ENCODE measurements at regions of chr1 and their contacts with region 1.

Region 1: GRCh38 chr1:237873487-237874211 is 17.1 kb downstream of the ZP4 start:
- DNase-seq: peak; percentile 20
- ATAC-seq: peak; percentile 78
- H3K4me3 Mint-ChIP-seq: no peak overlapping the region
- H3K27ac Mint-ChIP-seq: no peak overlapping the region
- H3K4me1 Mint-ChIP-seq: no peaks in the 10 kb centered on the region
- H3K27me3 Mint-ChIP-seq: peaks cover 4% of the 10 kb centered on the region

Region 2: DNA sequence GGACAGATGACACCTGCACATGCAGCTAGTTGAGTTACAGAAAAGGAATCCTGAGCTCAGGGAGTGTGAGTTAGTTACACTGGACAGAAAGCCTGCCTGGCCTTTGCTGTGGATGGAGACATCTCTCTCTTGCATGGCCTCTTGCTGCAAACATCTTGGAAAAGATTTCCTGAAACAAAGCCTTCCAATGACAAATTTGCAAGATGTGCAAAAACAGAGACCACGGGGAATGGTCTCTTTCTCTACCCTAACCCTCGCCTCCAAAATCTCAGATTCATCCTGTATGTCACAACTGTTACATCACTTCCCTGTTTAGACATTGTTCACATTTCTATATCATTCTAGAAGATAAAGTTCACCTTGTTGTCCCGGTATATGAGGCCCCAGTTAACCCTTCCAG is 416.1 kb before region 1 on chr1:
- CTCF ChIA-PET with region 1: no interaction called
- POLR2A ChIA-PET with region 1: no interaction called
- intact Hi-C with region 1: no loop called
- DNase-seq: no peak
- ATAC-seq: no peak
- H3K4me3 Mint-ChIP-seq: no peak overlapping the region
- H3K27ac Mint-ChIP-seq: no peak overlapping the region
- H3K4me1 Mint-ChIP-seq: no peaks in the 10 kb centered on the region
- H3K27me3 Mint-ChIP-seq: peaks cover 2% of the 10 kb centered on the region

Region 3: DNA sequence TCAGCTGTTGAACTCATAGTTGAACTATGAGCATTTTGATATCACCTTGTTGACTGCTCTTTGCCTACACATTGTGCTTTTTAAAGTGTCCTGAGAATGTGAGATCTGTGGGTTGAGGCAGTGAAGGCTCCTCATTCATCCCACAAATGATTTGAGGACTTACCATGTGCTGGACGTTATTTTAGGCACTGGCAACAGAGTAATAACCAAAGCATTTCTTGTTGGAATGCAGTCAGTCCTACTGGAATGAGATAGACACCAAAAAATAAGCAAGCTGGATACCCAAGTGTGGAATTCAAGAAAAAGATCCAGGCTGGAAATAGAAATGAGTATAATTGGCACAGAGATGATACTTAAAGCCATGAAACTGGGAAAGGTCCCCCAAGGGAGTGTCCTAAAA is 56.4 kb before region 1 on chr1:
- CTCF ChIA-PET with region 1: no interaction called
- POLR2A ChIA-PET with region 1: no interaction called
- intact Hi-C with region 1: no loop called
- DNase-seq: no peak
- ATAC-seq: no peak
- H3K4me3 Mint-ChIP-seq: no peak overlapping the region
- H3K27ac Mint-ChIP-seq: no peak overlapping the region
- H3K4me1 Mint-ChIP-seq: no peaks in the 10 kb centered on the region
- H3K27me3 Mint-ChIP-seq: no peaks in the 10 kb centered on the region

Region 4: DNA sequence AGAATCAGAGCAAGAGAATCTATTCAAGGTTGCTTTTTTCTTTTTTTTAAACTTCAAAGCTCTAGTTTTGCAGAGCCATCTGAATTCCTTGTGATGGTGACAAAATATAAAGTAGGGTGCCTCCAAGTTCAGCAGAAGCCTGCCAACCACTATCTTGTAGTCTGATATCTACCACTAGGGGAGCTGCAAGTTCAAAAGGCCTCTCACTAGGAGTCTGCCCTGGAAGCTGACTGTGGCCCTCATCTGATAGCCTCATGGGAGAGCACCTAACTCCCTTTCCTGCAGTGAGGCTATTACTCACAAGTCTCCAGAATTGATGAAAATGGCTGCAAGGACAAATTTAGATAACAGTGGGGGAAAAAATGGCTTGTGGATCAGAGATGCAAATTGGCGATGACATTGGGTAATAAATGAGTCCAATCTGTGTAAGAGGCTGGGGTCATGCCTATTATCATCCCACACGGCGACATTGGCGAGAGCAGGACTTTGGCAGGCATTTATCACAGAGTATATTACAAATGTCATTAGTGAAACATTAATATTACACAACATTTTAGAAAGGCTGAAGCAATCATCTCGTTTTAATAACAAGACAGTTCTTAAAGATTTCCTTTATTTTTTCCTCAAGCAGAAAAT is 27.8 kb after region 1 on chr1:
- CTCF ChIA-PET with region 1: no interaction called
- POLR2A ChIA-PET with region 1: no interaction called
- intact Hi-C with region 1: no loop called
- DNase-seq: no peak
- ATAC-seq: no peak
- H3K4me3 Mint-ChIP-seq: no peak overlapping the region
- H3K27ac Mint-ChIP-seq: no peak overlapping the region
- H3K4me1 Mint-ChIP-seq: no peaks in the 10 kb centered on the region
- H3K27me3 Mint-ChIP-seq: no peaks in the 10 kb centered on the region

Region 5: DNA sequence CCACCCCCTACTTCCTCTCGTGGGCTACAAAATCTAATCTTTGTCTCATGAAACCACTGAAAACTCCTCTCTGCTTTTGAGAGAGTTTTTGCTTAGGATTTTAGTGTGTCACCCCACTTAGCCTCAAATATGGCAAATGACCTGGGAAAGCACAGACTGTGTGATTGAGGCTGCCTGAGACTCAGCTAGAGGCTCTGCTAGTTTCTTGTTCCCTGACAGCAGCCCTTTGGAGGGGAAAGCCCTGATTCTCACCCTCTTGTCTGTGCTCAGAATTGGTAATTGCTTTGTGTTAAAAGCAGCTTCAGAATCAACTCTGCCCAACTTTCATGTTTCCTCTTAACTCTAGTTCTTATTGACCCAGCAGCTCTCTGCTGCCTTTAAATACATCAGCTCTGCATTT is 102.7 kb after region 1 on chr1:
- CTCF ChIA-PET with region 1: no interaction called
- POLR2A ChIA-PET with region 1: no interaction called
- intact Hi-C with region 1: no loop called
- DNase-seq: no peak
- ATAC-seq: no peak
- H3K4me3 Mint-ChIP-seq: no peak overlapping the region
- H3K27ac Mint-ChIP-seq: no peak overlapping the region
- H3K4me1 Mint-ChIP-seq: no peaks in the 10 kb centered on the region
- H3K27me3 Mint-ChIP-seq: no peaks in the 10 kb centered on the region

Region 6: GRCh38 chr1:238639861-238640260 is 766.2 kb after region 1 on chr1:
- CTCF ChIA-PET with region 1: no interaction called
- POLR2A ChIA-PET with region 1: no interaction called
- intact Hi-C with region 1: loop called in 1 of 2 experiments (anchors 10 kb)
- DNase-seq: no peak
- ATAC-seq: no peak
- H3K4me3 Mint-ChIP-seq: no peak overlapping the region
- H3K27ac Mint-ChIP-seq: no peak overlapping the region
- H3K4me1 Mint-ChIP-seq: no peaks in the 10 kb centered on the region
- H3K27me3 Mint-ChIP-seq: no peaks in the 10 kb centered on the region